ENCODE measurements at regions of chr2 and their contacts with region 1.

Region 1: DNA sequence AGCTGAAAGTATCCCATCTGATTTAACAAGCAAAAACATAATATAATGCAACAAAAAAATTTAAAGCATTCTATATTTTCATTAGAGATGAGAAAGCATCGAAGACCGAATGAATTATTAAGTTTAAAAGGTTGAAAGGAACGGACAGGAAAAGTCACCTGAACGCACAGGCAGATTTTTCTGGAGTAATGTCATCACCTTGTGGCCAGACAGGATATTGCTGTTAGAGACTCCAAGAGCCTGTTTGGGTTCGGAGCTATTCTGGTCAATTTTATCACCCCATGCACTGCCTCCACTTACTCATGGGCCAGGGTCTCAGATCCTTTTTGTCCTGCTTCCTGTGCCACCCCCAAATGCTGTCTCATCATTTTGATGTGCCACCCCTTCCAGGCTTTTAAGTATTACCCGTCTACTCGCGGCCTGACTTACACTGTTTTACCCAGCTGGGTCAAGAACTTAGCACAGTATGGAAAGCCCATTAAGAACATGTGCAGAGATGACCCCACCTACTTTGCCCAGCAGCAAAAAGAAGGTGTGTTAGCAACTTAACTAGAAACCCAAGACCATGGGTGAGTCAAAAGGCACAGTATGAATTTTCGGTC is 27.3 kb downstream of the GKN2 start:
- DNase-seq: no peak
- H3K4me3 ChIP-seq: no peak overlapping the region
- H3K27ac ChIP-seq: no peak overlapping the region
- H3K4me1 ChIP-seq: no peaks in the 10 kb centered on the region
- H3K27me3 ChIP-seq: no peaks in the 10 kb centered on the region
- CTCF ChIP-seq: peak; percentile 77 to 91 (median 83)

Region 2: GRCh38 chr2:68594674-68595492 is 330.5 kb before region 1 on chr2:
- intact Hi-C with region 1: no loop called
- DNase-seq: no peak
- H3K4me3 ChIP-seq: no peak overlapping the region
- H3K27ac ChIP-seq: no peak overlapping the region
- H3K4me1 ChIP-seq: no peaks in the 10 kb centered on the region
- H3K27me3 ChIP-seq: no peaks in the 10 kb centered on the region
- CTCF ChIP-seq: peak in 2 of 3 experiments; percentile 11 to 43

Region 3: DNA sequence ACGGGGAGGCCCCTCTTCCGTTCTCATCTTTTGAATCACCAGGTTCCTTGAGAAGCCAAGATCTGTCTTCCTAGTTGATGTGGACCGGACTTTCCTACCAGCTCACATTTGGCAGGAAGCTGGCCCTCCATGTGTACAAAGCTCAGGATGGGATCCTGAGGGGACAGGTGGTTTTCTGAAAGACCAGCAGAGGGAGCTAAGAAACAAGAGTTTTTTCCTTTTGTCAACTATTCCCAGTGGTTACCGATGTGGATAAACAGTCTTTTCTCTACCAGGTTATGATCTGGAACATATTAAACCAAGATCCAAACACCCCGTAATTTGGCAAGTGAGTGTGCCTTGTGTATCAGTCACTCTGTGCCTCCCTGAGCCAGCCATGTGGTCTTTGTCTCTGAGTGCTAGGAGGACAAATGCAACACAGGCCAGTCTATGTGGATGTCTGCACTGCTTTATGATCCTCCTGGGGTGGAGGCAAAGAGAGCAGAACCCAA is 215.9 kb before region 1 on chr2:
- intact Hi-C with region 1: loop called (anchors 2 kb)
- DNase-seq: no peak
- H3K4me3 ChIP-seq: no peak overlapping the region
- H3K27ac ChIP-seq: no peak overlapping the region
- H3K4me1 ChIP-seq: peaks cover 0 to 5% of the 10 kb centered on the region in 2 donors
- H3K27me3 ChIP-seq: no peaks in the 10 kb centered on the region
- CTCF ChIP-seq: peak in 2 of 3 experiments; percentile 46 to 72

Region 4: GRCh38 chr2:69589973-69590652 is 664.7 kb after region 1 on chr2:
- intact Hi-C with region 1: no loop called
- DNase-seq: no peak
- H3K4me3 ChIP-seq: no peak overlapping the region
- H3K27ac ChIP-seq: no peak overlapping the region
- H3K4me1 ChIP-seq: peaks cover 0 to 5% of the 10 kb centered on the region in 2 donors
- H3K27me3 ChIP-seq: no peaks in the 10 kb centered on the region
- CTCF ChIP-seq: no peak

Measured in ascending aorta (tissue), 2 donors.